ENCODE measurements at regions of chr10 and their contacts with region 1.

Region 1: GRCh38 chr10:97686962-97687784 is at the start of gene AVPI1:
- DNase-seq: peak; percentile 97
- H3K4me3 ChIP-seq: peak within 1 kb of the TSS; percentile 87
- H3K27ac ChIP-seq: peak within 1 kb of the TSS; percentile 91
- H3K4me1 ChIP-seq: peaks cover 60% of the 10 kb centered on the region
- H3K27me3 ChIP-seq: no peaks in the 10 kb centered on the region
- CTCF ChIP-seq: no peak
- total RNA-seq, gene AVPI1: 6.7 TPM

Region 2: DNA sequence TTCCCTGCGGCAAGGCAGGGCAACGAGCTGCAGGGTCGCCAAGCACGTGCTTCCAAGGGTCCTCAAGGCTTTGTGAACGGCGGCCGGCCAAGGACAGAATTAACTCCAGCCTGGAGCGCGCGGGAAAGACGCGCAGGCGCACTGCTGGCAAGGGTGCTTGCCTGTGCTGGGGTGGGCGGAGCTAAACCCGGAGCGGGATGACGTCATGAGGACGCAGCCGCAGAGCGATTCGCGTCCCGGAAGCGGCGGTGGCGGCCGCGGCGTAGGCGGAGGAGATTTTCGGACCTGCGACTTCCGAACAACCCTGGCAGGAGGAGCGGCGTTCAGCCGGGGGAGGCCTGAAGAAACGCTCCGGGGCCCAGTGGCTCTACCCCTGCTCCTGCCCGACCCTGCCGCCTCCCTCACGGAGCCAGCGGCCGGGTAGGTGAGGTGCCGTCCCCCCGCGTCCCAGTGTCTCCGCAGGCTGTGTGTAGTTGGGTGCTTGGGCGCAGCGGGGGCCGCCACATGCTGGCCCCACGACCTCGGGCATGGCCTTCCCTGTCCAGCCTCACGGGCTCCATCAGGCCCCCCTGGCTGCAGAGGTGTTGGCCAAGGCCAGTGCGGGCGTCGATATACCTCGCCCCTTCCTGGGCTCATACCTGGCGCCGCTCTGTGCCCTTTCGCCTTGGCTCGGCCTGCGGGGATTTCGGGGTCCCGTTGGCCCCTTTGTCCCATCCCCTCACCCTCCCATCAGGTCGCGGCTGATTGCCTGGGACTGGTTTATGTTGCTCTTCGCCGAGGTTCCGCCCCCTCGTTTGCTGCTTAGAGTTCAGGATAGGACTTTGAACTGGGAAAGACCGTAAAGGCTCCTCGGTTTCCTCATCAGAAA is 50.0 kb after region 1 on chr10 and contains the start of gene ZFYVE27:
- intact Hi-C with region 1: loop called (anchors 10 kb)
- DNase-seq: peak; percentile 97
- H3K4me3 ChIP-seq: peak within 1 kb of the TSS; percentile 92
- H3K27ac ChIP-seq: peak within 1 kb of the TSS; percentile 88
- H3K4me1 ChIP-seq: peaks cover 21% of the 10 kb centered on the region
- H3K27me3 ChIP-seq: no peaks in the 10 kb centered on the region
- CTCF ChIP-seq: peak; percentile 16
- total RNA-seq, gene ZFYVE27: 13.2 TPM

Region 3: GRCh38 chr10:98016772-98017475 is 329.8 kb after region 1 on chr10:
- intact Hi-C with region 1: no loop called
- DNase-seq: no peak
- H3K4me3 ChIP-seq: no peak overlapping the region
- H3K27ac ChIP-seq: no peak overlapping the region
- H3K4me1 ChIP-seq: no peaks in the 10 kb centered on the region
- H3K27me3 ChIP-seq: peaks cover 82% of the 10 kb centered on the region
- CTCF ChIP-seq: no peak

Region 4: DNA sequence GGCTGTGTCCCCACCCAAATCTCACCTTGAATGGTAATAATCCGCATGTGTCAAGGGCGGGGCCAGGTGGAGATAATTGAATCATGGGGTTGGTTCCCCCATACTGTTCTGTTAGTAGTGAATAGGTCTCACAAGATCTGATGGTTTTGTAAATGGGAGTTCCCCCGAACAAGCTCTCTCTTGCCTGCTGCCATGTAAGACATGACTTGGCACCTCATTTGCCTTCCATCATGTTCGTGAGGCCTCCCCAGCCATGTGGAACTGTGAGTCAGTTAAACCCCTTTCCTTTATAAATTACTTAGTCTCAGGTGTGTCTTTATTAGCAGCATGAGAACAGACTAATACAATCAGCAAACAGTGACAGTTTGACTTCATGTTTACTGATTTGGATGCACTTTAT is 432.7 kb after region 1 on chr10:
- intact Hi-C with region 1: no loop called
- DNase-seq: no peak
- H3K4me3 ChIP-seq: no peak overlapping the region
- H3K27ac ChIP-seq: no peak overlapping the region
- H3K4me1 ChIP-seq: no peaks in the 10 kb centered on the region
- H3K27me3 ChIP-seq: peaks cover 44% of the 10 kb centered on the region
- CTCF ChIP-seq: no peak